ENCODE measurements at regions of chr2 and their contacts with region 1.

Region 1: GRCh38 chr2:69907216-69907615 is 7.7 kb upstream of the MXD1 start:
- DNase-seq: no peak
- H3K4me3 ChIP-seq: no peak overlapping the region
- H3K27ac ChIP-seq: no peak overlapping the region
- H3K4me1 ChIP-seq: no peaks in the 10 kb centered on the region
- H3K27me3 ChIP-seq: no peaks in the 10 kb centered on the region
- CTCF ChIP-seq: no peak
- POLR2A ChIP-seq: no peak

Region 2: DNA sequence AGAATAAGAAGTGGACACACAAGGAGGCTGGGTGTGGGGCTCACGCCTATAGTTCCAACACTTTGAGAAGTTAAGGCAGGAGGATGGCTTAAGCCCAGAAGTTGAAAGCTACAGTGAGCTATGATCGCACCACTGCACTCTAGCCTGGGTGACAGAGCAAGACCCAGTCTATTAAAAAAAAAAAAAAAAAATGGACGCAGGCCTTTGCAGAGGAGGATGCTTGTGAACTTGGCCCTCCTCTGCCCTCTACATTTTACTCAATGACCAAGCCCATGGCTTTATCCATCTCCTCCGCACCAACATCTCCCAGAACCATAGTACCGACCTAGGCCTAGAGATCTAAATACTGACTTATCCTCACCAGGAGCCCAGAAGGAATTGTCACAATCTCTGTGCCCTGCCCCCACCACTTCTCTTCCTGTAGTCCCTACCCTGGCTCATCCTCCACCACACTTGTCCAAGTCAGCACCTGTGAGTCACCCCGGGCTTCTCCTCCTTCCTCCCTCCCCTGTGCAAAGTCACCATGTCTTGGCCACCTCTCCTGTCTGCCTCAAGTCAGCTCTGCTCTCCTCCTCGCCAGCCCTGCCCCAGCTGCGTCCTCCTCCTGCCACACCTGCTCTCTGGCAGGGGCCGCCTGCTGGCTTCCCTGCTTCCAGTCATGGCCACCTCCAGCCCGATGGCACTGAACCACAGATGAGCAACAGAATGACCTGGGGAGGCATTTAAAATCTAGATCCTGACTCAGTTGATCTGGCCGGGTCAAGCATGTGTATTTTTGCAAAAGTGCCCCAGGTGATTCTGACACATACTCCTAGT is 90.0 kb after region 1 on chr2:
- intact Hi-C with region 1: no loop called
- DNase-seq: no peak
- H3K4me3 ChIP-seq: no peak overlapping the region
- H3K27ac ChIP-seq: no peak overlapping the region
- H3K4me1 ChIP-seq: no peaks in the 10 kb centered on the region
- H3K27me3 ChIP-seq: no peaks in the 10 kb centered on the region
- CTCF ChIP-seq: no peak
- POLR2A ChIP-seq: no peak

Region 3: GRCh38 chr2:70301344-70302194 is 394.4 kb after region 1 on chr2 and contains the start of gene FAM136A:
- intact Hi-C with region 1: loop called (anchors 5 kb)
- DNase-seq: peak; percentile 78 to 87
- H3K4me3 ChIP-seq: peak within 1 kb of the TSS; percentile 73 to 82
- H3K27ac ChIP-seq: peak within 1 kb of the TSS; percentile 75 to 82
- H3K4me1 ChIP-seq: no peaks in the 10 kb centered on the region
- H3K27me3 ChIP-seq: no peaks in the 10 kb centered on the region
- CTCF ChIP-seq: peak; percentile 92 to 99 (median 94)
- POLR2A ChIP-seq: peak in 1 of 2 donors; percentile 40
- total RNA-seq, gene FAM136A: 4.9 to 79.4 (median 24.5) TPM

Measured in uterus (tissue), 4 donors.